Astrocyte of the cerebellum (primary cell): ENCODE measurements at regions of chr5 and their contacts with region 1.

Region 1: GRCh38 chr5:56941981-56942380 is 9.9 kb downstream of the MIER3 start:
- DNase-seq: peak; percentile 20
- H3K4me3 ChIP-seq: no peak overlapping the region
- CTCF ChIP-seq: no peak

Region 2: GRCh38 chr5:57221049-57221568 is 279.1 kb after region 1 on chr5:
- in situ Hi-C with region 1: loop called (anchors 25 kb)
- DNase-seq: peak; percentile 47
- H3K4me3 ChIP-seq: no peak overlapping the region
- CTCF ChIP-seq: peak; percentile 44